ENCODE measurements at regions of chr1 and their contacts with region 1.

Region 1: GRCh38 chr1:5745776-5746610 is 246.2 kb downstream of the NPHP4 start:
- DNase-seq: peak; percentile 68
- ATAC-seq: peak; percentile 89

Region 2: GRCh38 chr1:5514519-5515183 is 231.3 kb before region 1 on chr1:
- intact Hi-C with region 1: loop called (anchors 5 kb)
- DNase-seq: peak; percentile 81
- ATAC-seq: peak; percentile 73

Region 3: GRCh38 chr1:6108937-6109614 is 363.1 kb after region 1 on chr1:
- intact Hi-C with region 1: no loop called
- DNase-seq: peak; percentile 41
- ATAC-seq: peak; percentile 66

Measured in left ventricle myocardium superior (tissue), 1 donor.